Heart right ventricle (tissue), 16 donors: ENCODE measurements at regions of chr6 and their contacts with region 1.

Region 1: GRCh38 chr6:164731539-164731938 is 577.9 kb downstream of the C6orf118 start:
- DNase-seq: no peak
- ATAC-seq: no peak
- H3K4me3 ChIP-seq: no peak overlapping the region
- H3K27ac ChIP-seq: no peak overlapping the region
- H3K4me1 ChIP-seq: no peaks in the 10 kb centered on the region
- H3K27me3 ChIP-seq: no peaks in the 10 kb centered on the region
- CTCF ChIP-seq: no peak

Region 2: DNA sequence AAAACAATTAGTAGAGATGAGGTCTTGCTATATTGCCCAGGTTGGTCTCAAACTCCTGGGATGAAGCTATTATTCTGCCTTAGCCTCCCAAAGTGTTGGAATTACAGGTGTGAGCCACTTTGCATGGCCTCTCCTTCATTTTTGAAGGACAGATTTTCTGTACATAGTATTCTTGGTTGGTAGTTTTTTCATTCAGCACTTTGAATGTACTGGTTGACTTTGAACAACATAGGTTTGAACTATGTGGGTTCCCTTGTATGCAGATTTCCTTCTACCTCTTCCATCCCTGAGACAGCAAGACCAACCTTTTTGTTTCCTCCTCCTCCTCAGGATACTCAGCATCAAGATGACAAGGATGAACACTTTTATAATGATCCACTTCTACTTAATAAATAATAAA is 880.7 kb before region 1 on chr6:
- intact Hi-C with region 1: loop called in 1 of 10 experiments (anchors 5 kb)
- DNase-seq: no peak
- ATAC-seq: no peak
- H3K4me3 ChIP-seq: no peak overlapping the region
- H3K27ac ChIP-seq: no peak overlapping the region
- H3K4me1 ChIP-seq: no peaks in the 10 kb centered on the region
- H3K27me3 ChIP-seq: no peaks in the 10 kb centered on the region
- CTCF ChIP-seq: no peak

Region 3: GRCh38 chr6:164826831-164827442 is 95.4 kb after region 1 on chr6:
- intact Hi-C with region 1: no loop called
- DNase-seq: no peak
- ATAC-seq: no peak
- H3K4me3 ChIP-seq: no peak overlapping the region
- H3K27ac ChIP-seq: no peak overlapping the region
- H3K4me1 ChIP-seq: no peaks in the 10 kb centered on the region
- H3K27me3 ChIP-seq: no peaks in the 10 kb centered on the region
- CTCF ChIP-seq: no peak